Activated CD4-positive, alpha-beta T cell treated with anti-CD3 and anti-CD28 coated beads for 36 hours (primary cell): ENCODE measurements at regions of chr16 and their contacts with region 1.

Region 1: DNA sequence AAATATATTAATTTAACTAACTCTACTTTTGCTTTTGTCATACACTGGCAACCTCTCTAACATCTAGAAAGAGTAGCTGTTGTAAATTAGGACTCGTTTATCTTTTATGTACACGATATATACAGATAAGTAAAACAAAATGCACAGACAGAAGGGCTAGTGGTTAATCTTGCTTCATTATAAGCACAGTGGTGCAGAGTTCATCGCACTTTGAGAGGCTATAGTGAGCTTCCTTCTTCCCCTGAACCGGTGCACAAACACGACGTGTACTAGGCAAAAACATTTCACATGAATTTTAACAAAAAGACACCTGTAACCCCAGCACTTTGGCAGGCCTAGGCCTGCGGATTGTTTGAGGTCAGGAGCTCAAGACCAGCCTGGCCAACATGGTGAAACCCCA is 10.4 kb upstream of the GOT2 start:
- DNase-seq: no peak
- ATAC-seq: no peak
- H3K4me3 Mint-ChIP-seq: no peak overlapping the region
- H3K27ac Mint-ChIP-seq: no peak overlapping the region
- H3K4me1 Mint-ChIP-seq: no peaks in the 10 kb centered on the region
- H3K27me3 Mint-ChIP-seq: no peaks in the 10 kb centered on the region

Region 2: DNA sequence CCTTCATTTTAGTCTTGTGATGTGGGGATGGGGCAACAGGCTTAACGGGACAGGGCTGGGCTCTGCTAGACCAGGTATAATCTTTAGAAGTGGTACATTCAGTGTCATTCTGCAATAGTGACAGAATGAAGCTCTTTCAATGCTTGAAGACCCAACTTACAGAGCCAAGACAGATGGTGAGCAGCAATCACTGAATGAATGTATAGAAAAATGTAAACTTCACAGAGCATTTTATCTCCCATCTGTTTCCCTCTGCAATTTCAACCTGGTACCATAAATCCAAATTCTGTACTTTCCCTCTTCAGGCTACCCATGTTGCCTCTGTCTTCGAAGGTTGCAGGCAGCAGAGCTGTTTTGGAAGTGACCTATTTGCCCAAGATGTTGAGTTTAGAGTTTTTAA is 23.1 kb after region 1 on chr16:
- CTCF ChIA-PET with region 1: no interaction called
- POLR2A ChIA-PET with region 1: no interaction called
- intact Hi-C with region 1: loop called in 1 of 2 experiments (anchors 2 kb)
- DNase-seq: no peak
- ATAC-seq: no peak
- H3K4me3 Mint-ChIP-seq: no peak overlapping the region
- H3K27ac Mint-ChIP-seq: no peak overlapping the region
- H3K4me1 Mint-ChIP-seq: no peaks in the 10 kb centered on the region
- H3K27me3 Mint-ChIP-seq: peaks cover 10% of the 10 kb centered on the region